ENCODE measurements at regions of chr13 and their contacts with region 1.

Region 1: DNA sequence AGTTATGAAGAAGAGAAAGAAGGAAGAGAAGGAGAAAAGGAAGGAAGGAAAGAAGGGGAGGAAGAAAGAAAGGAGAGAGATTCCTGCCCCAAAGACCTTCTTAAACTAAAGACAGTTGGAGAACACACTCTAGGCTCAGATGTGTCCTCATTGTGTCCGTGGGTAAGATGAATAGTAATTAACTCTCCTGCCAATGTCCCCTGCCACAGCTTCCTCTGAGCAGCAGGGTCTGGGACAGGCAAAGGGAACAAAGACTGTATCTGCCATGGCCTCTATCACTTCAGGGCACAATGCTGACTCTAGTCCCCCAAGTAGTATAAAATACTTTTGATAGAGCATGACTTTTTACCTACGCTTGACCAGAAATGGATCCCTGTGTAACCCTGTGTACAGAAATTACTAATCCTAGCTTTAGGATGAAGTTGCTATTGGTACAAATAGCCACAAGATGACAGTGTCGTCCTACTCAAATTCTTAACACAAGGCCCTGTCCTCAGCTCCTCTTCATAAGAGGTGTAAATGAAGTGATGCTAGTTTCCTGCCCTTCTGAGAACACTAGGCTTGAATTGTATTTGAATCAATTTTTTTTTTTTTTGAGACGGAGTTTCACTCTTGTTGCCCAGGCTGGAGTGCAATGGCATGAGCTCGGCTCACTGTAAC is 186.2 kb upstream of the GPR12 start:
- DNase-seq: peak; percentile 42
- H3K4me3 ChIP-seq: no peak overlapping the region
- H3K27ac ChIP-seq: no peak overlapping the region
- H3K27me3 ChIP-seq: peaks cover 6% of the 10 kb centered on the region
- CTCF ChIP-seq: peak; percentile 90

Region 2: GRCh38 chr13:26957182-26957581 is 10.4 kb after region 1 on chr13:
- CTCF ChIA-PET with region 1: interaction called, 18 read pairs
- POLR2A ChIA-PET with region 1: no interaction called
- DNase-seq: no peak
- H3K4me3 ChIP-seq: no peak overlapping the region
- H3K27ac ChIP-seq: no peak overlapping the region
- H3K27me3 ChIP-seq: peaks cover 49% of the 10 kb centered on the region
- CTCF ChIP-seq: no peak

Region 3: DNA sequence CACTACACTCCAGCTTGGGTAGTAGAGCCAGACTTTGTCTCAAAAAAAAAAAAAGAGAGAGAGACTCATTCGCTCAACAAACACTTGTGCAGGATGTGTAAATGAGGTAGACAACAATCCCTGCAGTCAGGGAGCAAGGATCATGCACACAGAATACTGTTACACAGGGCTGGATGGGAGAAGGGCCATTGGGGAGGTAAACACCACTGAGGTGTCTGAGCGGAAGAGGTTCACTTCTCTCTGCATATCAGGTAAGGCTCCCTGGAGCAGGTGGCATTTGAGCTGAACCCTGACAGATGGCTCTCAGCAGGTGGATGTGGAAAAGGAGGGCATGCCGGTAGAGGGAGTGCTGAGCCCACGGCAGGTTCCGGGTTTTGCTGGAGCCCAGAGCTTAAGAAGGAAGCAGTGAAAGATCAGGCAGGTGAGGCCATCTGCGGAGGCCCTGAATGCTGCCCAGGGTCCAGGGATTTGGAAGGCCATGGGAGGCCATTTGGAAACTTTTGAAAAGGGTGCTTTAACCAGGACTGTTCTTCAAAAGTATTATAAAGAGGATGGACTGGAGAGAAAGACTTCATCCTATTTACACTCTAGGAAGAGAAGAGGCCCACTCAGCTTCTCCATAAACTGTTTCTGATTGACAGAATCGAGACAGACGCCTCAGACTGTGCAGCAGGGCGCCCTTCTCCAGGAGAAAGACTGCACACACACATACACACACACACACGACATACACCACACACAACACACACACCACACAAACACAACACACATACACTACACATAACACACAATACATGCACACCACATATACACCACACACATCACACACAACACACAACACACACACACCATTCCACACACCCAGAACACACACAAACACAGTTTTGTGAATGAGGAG is 25.4 kb after region 1 on chr13:
- CTCF ChIA-PET with region 1: interaction called, 18 read pairs
- POLR2A ChIA-PET with region 1: interaction called, 5 read pairs
- DNase-seq: no peak
- H3K4me3 ChIP-seq: no peak overlapping the region
- H3K27ac ChIP-seq: peak overlapping the region; percentile 0
- H3K27me3 ChIP-seq: no peaks in the 10 kb centered on the region
- CTCF ChIP-seq: peak; percentile 53

Region 4: DNA sequence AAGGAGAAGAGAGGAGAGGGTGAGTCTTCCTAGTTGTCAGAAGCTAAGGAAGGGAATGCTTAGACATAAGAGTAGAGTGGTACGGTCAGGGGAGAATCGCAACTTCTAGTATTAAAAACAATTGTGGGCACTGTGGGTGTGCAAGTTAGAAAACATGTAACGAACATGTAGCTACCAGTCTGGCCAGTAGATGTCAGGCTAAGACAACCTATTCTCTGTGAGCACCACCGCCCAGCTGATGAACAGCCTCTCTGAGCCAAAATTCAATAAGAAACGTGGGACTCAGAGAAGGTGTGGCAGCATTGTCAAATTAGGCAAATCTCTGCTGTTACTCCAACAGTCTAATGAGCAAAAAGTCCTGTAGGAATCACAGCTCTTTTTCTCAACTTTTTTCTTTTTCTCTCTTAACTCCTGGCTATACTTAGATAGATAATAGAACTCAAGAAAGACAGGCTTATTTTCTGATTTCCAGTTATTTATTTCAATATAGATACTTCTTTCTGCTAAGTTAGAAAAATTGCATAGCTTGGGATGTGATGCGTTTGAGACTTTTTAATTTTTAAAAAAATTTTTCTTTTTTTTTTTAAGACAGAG is 38.6 kb after region 1 on chr13:
- CTCF ChIA-PET with region 1: interaction called, 79 read pairs
- POLR2A ChIA-PET with region 1: interaction called, 6 read pairs
- DNase-seq: peak; percentile 54
- H3K4me3 ChIP-seq: no peak overlapping the region
- H3K27ac ChIP-seq: no peak overlapping the region
- H3K27me3 ChIP-seq: no peaks in the 10 kb centered on the region
- CTCF ChIP-seq: peak; percentile 77

Region 5: DNA sequence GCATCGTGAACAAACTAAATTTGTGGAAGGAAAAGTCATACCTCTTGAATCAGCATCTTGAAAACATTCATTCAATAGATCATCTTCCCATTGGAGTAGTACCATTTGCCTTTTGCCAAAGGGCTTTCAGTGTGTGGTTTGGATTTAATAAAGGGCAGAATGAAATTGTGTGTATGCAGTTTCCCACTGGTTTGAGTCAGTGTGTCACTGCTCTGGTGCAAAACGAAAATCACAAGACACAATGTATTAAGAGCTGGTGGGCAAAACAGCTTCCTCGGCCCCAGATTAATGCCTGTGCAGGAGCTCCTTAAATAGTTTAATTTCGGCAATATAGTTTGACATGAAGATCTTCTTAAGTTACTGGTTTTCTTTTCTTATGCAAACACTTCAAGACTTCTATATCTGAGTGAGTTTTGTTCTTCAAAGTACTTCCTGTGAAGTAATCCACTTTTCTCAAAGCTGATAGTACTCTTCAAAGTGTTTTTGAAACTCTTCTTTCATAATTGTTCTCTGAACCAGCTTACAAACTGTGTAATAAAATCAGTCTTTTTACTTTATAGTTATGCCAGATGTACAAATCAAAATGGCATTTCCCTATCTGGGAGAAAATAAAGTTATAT is 355.9 kb after region 1 on chr13:
- CTCF ChIA-PET with region 1: interaction called, 14 read pairs
- POLR2A ChIA-PET with region 1: no interaction called
- DNase-seq: no peak
- H3K4me3 ChIP-seq: no peak overlapping the region
- H3K27ac ChIP-seq: no peak overlapping the region
- H3K27me3 ChIP-seq: peaks cover 20% of the 10 kb centered on the region
- CTCF ChIP-seq: no peak

Region 6: DNA sequence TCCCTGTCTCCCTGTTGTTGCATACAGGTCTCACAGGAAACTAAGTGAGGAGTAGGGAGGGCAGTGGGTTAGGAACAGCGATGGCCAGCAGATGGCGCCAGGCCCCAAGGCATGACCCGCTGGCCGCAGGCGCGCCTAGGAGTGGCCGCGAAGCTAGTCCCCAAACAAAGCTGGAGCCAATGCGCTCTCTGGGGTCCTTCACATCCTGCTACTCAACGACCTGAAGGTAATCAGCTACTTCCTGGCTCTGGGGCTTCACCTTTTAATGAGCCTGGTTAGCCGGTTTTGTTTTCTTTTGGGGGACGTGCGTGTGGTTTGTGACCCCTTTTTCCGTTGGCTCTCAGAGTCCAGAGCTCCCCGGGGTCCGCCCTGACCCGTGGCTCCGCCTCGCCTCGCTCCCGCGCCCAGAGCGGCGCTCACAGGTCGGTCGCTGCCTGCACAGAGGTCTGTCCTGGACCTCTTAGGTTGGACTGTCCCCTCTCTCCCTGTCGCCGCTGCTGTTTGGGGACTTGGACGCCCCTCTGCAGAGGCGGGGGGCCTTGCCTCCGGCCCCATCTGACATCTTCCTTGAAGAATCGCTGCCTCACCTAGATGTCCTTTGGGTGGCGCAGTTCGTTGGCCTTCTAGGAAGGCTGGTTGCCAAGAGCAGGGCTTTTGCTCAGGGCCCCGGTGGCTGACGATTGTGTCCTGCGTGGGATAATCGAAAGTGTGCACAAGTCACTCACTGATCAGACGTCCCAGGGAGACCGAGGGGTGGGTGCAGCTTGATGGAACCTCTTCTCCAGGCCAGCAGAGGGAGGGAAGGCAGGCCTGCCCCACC is 415.5 kb after region 1 on chr13:
- CTCF ChIA-PET with region 1: interaction called, 216 read pairs
- POLR2A ChIA-PET with region 1: no interaction called
- DNase-seq: peak; percentile 46
- H3K4me3 ChIP-seq: peak overlapping the region; percentile 66
- H3K27ac ChIP-seq: no peak overlapping the region
- H3K27me3 ChIP-seq: peaks cover 6% of the 10 kb centered on the region
- CTCF ChIP-seq: peak; percentile 97

Region 7: DNA sequence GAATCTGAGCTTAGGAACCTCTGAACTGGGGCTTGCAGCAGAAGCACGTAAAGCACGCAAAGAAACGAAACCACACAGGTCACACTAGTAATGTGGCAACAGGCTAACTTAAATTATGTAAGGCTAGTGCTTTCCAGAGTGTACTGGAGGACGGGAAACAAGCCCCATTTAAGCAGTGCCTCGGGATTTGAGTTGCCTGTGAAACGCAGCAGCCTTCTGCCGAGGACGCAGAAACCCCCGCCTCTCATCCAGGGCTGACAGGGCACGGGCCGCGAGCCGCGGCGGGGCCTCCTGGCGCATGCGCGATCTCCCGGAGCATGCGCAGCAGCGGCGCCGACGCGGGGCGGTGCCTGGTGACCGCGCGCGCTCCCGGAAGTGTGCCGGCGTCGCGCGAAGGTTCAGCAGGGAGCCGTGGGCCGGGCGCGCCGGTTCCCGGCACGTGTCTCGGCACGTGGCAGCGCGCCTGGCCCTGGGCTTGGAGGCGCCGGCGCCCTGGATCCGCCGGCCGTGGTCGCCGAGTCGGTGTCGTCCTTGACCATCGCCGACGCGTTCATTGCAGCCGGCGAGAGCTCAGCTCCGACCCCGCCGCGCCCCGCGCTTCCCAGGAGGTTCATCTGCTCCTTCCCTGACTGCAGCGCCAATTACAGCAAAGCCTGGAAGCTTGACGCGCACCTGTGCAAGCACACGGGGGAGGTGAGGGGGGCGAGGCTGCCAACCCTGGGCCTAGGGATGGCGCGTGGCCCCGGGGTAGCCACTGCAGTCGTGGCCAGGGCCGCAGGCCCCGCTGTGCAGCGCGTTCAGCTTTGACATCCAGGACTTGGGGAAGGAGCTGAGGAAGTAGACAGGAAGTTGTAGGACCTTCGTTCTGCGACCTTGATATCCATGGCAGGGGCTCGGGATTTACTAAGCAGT is 477.7 kb after region 1 on chr13 and contains the start of gene GTF3A:
- CTCF ChIA-PET with region 1: interaction called, 10 read pairs
- POLR2A ChIA-PET with region 1: no interaction called
- DNase-seq: peak; percentile 52
- H3K4me3 ChIP-seq: peak within 1 kb of the TSS; percentile 85
- H3K27ac ChIP-seq: peak within 1 kb of the TSS; percentile 21
- H3K27me3 ChIP-seq: no peaks in the 10 kb centered on the region
- CTCF ChIP-seq: no peak
- polyA plus RNA-seq, gene GTF3A: 89.0 and 104 TPM in 2 replicates